ENCODE measurements at regions of chr6 and their contacts with region 1.

Region 1: DNA sequence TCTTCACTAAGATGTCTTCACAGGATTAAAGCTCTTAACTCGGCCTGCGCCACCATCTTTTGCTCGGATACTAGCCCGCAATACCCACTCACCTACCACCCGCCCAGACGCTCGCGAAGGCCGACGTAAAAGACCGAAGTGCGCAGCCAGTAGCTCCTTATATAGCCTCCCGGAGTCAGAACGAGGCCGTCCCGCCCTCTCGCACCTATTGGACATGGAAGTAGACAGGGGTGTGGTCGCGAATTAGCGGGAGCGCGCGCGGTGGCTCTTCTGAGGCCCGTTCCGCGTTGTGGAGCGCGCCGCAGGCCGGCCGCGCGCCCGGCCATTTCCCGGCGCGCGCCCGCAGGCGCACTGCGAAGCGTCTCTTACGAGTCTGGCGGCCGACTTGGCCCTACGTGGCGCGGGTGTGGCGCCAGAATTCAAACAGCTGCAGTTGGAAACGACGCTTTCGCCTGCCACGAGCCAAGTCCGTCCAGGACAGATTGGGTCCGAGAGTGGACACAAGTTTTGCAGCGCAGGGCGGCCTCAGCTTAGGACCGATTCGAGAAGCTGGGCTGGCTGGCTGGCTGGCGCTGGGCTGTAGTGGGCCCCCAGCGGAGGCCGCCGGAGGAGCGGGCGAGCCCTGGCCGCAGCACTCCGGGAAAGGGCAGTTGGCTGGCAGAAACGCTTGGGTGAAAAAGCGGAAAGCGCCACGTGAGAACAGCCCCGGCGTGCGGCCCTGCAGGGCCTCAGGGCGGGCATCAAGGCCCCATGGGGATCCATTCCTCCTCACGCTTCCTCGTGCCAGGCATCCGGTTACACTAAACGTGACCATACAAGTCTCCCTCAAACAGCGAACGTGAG is 36.1 kb upstream of the SYNCRIP start:
- DNase-seq: peak; percentile 96
- ATAC-seq: peak; percentile 81
- H3K4me3 Mint-ChIP-seq: peak overlapping the region; percentile 96
- H3K27ac Mint-ChIP-seq: peak overlapping the region; percentile 91
- H3K4me1 Mint-ChIP-seq: peaks cover 42% of the 10 kb centered on the region
- H3K27me3 Mint-ChIP-seq: peaks cover 3% of the 10 kb centered on the region; the same call in 1 of the 2 replicates
- CTCF ChIP-seq: no peak

Region 2: GRCh38 chr6:85593438-85594196 is 85.2 kb before region 1 on chr6 and contains the start of gene SNX14:
- CTCF ChIA-PET with region 1: no interaction called
- POLR2A ChIA-PET with region 1: interaction called, 12 read pairs
- DNase-seq: peak; percentile 75
- ATAC-seq: peak; percentile 79
- H3K4me3 Mint-ChIP-seq: peak within 1 kb of the TSS; percentile 96
- H3K27ac Mint-ChIP-seq: peak within 1 kb of the TSS; percentile 97
- H3K4me1 Mint-ChIP-seq: peaks cover 16% of the 10 kb centered on the region
- H3K27me3 Mint-ChIP-seq: peaks cover 18% of the 10 kb centered on the region
- CTCF ChIP-seq: no peak
- total RNA-seq, gene SNX14: 34.3 to 42.6 TPM (median 36.4 TPM) in 3 replicates

Region 3: DNA sequence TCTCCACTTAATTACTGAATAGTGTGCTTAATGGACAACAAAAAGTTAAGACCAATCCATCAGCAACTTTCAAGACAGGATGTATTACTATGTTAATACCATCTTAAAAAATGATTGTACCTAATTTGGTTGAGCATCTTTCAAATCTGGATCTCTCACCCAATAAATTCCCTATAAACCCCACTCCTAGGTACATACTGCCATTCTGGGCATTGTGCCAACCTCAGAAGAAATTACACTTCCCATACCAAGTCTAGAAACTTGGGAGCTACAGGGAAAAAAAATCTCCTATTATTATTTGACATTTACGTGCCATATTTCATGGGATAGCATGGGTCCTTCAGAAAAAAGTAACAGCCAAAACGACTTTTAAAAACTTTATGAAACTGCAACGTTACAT is 41.2 kb before region 1 on chr6:
- CTCF ChIA-PET with region 1: interaction called, 7 read pairs
- POLR2A ChIA-PET with region 1: interaction called, 102 read pairs
- DNase-seq: no peak
- ATAC-seq: no peak
- H3K4me3 Mint-ChIP-seq: no peak overlapping the region
- H3K27ac Mint-ChIP-seq: peak overlapping the region; percentile 18; the same call in 1 of the 2 replicates
- H3K4me1 Mint-ChIP-seq: peaks cover 48% of the 10 kb centered on the region
- H3K27me3 Mint-ChIP-seq: no peaks in the 10 kb centered on the region
- CTCF ChIP-seq: no peak

Region 4: DNA sequence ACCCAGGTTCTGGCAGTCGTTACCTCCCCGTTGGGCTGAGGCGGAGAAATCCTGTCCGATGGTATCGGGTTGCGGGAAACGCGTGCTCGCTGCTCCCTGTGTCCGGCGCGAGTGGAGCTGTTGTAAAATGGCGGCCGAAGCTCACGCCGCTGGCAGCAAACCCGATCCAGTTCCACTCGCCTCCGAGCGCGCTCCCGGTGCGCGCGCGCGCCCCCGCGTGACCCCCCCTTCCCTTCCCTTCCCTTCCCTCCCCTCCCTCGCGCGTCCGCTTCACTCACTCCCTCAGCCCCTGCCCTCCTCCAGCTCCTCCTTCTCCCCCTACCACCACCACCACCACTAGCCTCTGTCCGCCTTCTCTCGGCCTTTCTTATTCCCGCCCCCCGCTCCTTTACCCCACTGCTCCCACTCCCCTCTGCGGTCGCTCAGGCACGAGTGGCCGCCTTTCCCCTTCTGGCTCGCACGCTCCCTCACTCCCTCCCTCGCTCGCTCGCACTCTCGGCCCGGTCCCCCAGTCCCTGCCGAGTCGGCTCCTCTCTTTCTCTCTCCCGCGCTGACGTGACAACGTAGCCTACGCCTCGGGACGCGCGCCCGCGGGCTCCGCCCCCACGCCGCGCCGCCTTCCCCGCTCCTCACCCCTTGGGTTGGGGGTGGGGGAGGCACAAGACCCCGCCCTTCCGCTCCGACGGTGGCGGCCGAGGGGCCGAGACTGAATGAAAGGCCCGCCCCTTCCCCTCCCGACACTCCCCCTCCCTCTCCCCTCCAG is 35.9 kb before region 1 on chr6 and contains the start of gene SYNCRIP:
- CTCF ChIA-PET with region 1: interaction called, 7 read pairs
- POLR2A ChIA-PET with region 1: interaction called, 102 read pairs
- DNase-seq: peak; percentile 98
- ATAC-seq: peak; percentile 85
- H3K4me3 Mint-ChIP-seq: peak within 1 kb of the TSS; percentile 94
- H3K27ac Mint-ChIP-seq: peak within 1 kb of the TSS; percentile 98
- H3K4me1 Mint-ChIP-seq: peaks cover 47% of the 10 kb centered on the region
- H3K27me3 Mint-ChIP-seq: no peaks in the 10 kb centered on the region
- CTCF ChIP-seq: no peak
- total RNA-seq, gene SYNCRIP: 139 to 150 TPM (median 144 TPM) in 3 replicates

Region 5: GRCh38 chr6:85756982-85757381 is 78.2 kb after region 1 on chr6:
- CTCF ChIA-PET with region 1: no interaction called
- POLR2A ChIA-PET with region 1: no interaction called
- DNase-seq: no peak
- ATAC-seq: no peak
- H3K4me3 Mint-ChIP-seq: no peak overlapping the region
- H3K27ac Mint-ChIP-seq: no peak overlapping the region
- H3K4me1 Mint-ChIP-seq: no peaks in the 10 kb centered on the region
- H3K27me3 Mint-ChIP-seq: peaks cover 10% of the 10 kb centered on the region; the same call in 1 of the 2 replicates
- CTCF ChIP-seq: no peak